Ascending aorta (tissue), 2 donors: ENCODE measurements at regions of chr6 and their contacts with region 1.

Region 1: GRCh38 chr6:52577022-52577777 is at the start of gene TRAM2:
- DNase-seq: peak; percentile 16 to 89
- H3K4me3 ChIP-seq: peak within 1 kb of the TSS; percentile 82 to 88
- H3K27ac ChIP-seq: peak within 1 kb of the TSS; percentile 99 to 100
- H3K4me1 ChIP-seq: peaks cover 3 to 26% of the 10 kb centered on the region in 2 donors
- H3K27me3 ChIP-seq: no peaks in the 10 kb centered on the region
- CTCF ChIP-seq: no peak
- total RNA-seq, gene TRAM2: 32.6 TPM

Region 2: GRCh38 chr6:52284460-52285176 is 292.6 kb before region 1 on chr6 and contains the start of gene MCM3:
- intact Hi-C with region 1: loop called (anchors 10 kb)
- DNase-seq: peak; percentile 96 to 99
- H3K4me3 ChIP-seq: peak within 1 kb of the TSS; percentile 75 to 100
- H3K27ac ChIP-seq: peak within 1 kb of the TSS; percentile 71 to 72
- H3K4me1 ChIP-seq: peaks cover 10 to 11% of the 10 kb centered on the region in 2 donors
- H3K27me3 ChIP-seq: no peaks in the 10 kb centered on the region
- CTCF ChIP-seq: no peak
- total RNA-seq, gene MCM3: 44.6 TPM

Region 3: GRCh38 chr6:52497652-52498408 is 79.4 kb before region 1 on chr6:
- intact Hi-C with region 1: loop called (anchors 1 kb)
- DNase-seq: peak in 1 of 2 donors; percentile 86
- H3K4me3 ChIP-seq: no peak overlapping the region
- H3K27ac ChIP-seq: peak overlapping the region; percentile 78 to 90
- H3K4me1 ChIP-seq: peaks cover 11 to 31% of the 10 kb centered on the region in 2 donors
- H3K27me3 ChIP-seq: no peaks in the 10 kb centered on the region
- CTCF ChIP-seq: no peak

Region 4: DNA sequence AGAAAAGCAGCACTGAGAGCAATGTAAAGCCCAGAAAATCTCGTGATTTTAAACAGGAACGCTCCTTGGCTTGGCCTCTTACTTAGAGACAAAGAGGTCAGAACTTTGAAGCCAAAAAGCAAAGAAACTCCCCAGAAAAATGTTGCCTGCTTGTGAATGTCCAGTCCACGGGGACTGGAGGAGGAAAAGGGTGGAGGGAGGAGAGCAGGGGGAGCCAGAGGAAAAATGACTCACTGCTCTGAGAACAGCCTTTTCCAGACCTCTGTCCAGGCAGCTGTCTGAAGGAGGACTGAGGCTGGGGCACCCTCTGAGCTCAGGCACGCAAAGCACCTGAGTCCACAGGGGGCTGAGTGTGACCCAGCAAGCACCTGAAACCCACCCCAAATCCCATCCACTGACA is 65.0 kb before region 1 on chr6:
- intact Hi-C with region 1: loop called (anchors 2 kb)
- DNase-seq: peak; percentile 26 to 81
- H3K4me3 ChIP-seq: no peak overlapping the region
- H3K27ac ChIP-seq: peak overlapping the region; percentile 86 to 88
- H3K4me1 ChIP-seq: peaks cover 10 to 52% of the 10 kb centered on the region in 2 donors
- H3K27me3 ChIP-seq: no peaks in the 10 kb centered on the region
- CTCF ChIP-seq: no peak

Region 5: DNA sequence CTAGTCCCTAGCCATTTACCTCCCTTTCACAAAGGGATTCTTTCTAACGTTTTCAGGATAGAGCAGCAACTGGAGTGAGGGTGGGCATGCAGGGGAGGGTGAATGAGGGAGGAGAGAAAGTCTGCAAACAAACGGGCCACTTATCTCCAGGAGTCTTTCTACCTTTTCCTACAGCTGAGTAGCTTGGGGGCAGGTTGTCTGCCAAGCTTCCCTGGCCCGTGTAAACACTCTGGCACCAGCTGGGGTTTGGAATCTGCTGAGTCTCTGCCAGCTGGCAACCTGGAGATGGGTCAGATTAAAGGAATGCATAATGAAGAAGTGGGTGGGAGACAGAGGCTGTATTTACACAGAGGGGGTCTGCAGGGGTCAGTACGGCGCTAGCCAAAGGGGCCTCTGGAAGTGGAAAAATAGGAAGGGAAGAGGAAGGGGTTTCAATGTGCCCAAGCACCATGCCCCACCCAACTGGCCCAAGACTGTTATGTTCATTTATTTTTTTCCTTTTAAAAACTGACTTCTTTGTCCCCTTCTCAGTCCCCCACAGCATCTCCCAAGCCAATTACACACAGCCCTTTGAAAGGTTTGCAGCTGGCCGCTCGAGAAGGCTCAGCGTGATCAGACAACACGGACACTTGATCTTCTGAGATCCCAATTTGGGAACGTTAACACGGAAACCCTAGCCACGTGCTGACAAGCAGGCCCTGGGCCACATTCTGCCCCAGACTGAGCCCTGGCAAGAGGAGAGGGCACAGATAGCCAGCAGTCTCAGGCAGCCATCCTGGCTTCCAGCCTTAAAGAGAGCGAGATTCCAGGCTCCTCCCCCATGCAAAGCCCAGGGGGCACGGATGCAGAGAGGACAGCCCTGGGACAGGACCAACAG is 25.6 kb before region 1 on chr6:
- intact Hi-C with region 1: loop called (anchors 2 kb)
- DNase-seq: peak in 1 of 2 donors; percentile 92
- H3K4me3 ChIP-seq: peak overlapping the region in 1 of 2 donors; percentile 46
- H3K27ac ChIP-seq: peak overlapping the region; percentile 74 to 81
- H3K4me1 ChIP-seq: peaks cover 23 to 77% of the 10 kb centered on the region in 2 donors
- H3K27me3 ChIP-seq: no peaks in the 10 kb centered on the region
- CTCF ChIP-seq: no peak

Region 6: DNA sequence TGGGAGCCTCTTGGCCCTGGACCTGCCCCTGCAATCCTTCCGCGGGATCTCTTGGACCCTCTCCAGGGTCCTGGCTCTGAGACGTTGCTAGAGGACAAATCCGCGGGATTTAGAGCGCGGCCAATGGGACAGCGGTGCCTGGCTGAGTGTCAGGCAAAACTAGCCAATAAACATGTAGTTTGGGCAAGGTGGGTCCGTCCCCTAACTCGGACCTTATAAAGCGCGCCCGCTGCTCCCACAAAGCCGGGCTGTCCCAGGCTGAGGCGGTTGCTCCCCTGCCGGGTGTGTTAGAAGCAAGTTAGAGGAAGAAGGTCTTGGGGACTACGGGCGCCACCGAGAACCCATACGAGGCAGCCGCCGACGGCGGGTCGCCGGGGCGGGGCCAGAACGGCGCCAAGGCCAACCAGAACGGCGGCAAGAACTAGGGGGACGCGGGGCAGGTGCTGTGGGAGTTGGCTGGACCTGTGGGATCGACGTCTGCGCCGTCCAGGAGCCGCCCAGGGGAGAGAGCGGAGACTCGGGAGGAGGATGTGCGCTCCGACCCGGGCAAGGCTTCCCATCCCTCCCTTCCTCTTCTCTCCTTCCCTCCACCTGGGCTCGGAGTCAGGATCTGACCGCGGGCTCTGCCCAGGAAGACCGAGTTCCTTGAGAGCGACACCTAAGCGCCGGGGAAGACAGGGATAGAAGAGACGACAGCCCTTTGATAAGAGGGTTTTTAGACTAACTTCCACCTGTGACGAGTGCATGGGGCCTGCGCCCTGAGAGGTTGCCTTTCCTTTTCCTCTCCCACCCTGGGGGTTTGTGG is 87.2 kb after region 1 on chr6:
- intact Hi-C with region 1: loop called (anchors 5 kb)
- DNase-seq: peak; percentile 58 to 96
- H3K4me3 ChIP-seq: peak overlapping the region; percentile 80 to 86
- H3K27ac ChIP-seq: peak overlapping the region; percentile 72 to 78
- H3K4me1 ChIP-seq: peaks cover 4 to 12% of the 10 kb centered on the region in 2 donors
- H3K27me3 ChIP-seq: no peaks in the 10 kb centered on the region
- CTCF ChIP-seq: no peak